Endothelial cell of umbilical vein (primary cell): ENCODE measurements at regions of chr16 and their contacts with region 1.

Region 1: GRCh38 chr16:65704866-65705265 is 583.0 kb upstream of the CDH11 start:
- DNase-seq: no peak
- H3K4me3 ChIP-seq: no peak overlapping the region
- H3K27ac ChIP-seq: no peak overlapping the region
- H3K4me1 ChIP-seq: no peaks in the 10 kb centered on the region
- H3K27me3 ChIP-seq: no peaks in the 10 kb centered on the region
- CTCF ChIP-seq: peak in 1 of 2 donors; percentile 7
- POLR2A ChIP-seq: no peak

Region 2: DNA sequence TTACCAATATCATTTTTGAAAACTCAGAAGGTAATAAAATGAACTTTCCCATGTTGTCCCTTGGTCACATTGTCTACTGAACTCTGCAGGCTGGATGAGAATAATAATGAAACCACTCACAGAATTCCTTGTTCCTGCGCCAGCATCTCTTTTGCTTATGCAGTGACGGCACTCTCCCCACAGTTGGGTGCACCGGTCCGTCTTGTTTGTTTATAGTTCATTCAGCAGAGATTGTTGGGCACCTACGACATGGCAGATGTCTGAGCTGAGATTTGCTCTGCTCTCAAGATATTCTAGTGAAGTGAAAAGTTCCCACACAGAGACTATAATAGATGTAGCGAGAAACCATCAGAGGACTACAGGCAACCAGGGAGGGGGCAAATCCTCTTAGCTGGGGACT is 207.3 kb before region 1 on chr16:
- CTCF ChIA-PET with region 1: no interaction called
- POLR2A ChIA-PET with region 1: no interaction called
- dilution Hi-C with region 1: no loop called
- intact Hi-C with region 1: no loop called
- DNase-seq: no peak
- H3K4me3 ChIP-seq: no peak overlapping the region
- H3K27ac ChIP-seq: no peak overlapping the region
- H3K4me1 ChIP-seq: no peaks in the 10 kb centered on the region
- H3K27me3 ChIP-seq: no peaks in the 10 kb centered on the region
- CTCF ChIP-seq: no peak
- POLR2A ChIP-seq: no peak

Region 3: GRCh38 chr16:65634291-65634690 is 70.6 kb before region 1 on chr16:
- CTCF ChIA-PET with region 1: no interaction called
- POLR2A ChIA-PET with region 1: no interaction called
- dilution Hi-C with region 1: no loop called
- intact Hi-C with region 1: no loop called
- DNase-seq: no peak
- H3K4me3 ChIP-seq: no peak overlapping the region
- H3K27ac ChIP-seq: no peak overlapping the region
- H3K4me1 ChIP-seq: no peaks in the 10 kb centered on the region
- H3K27me3 ChIP-seq: no peaks in the 10 kb centered on the region
- CTCF ChIP-seq: no peak
- POLR2A ChIP-seq: no peak

Region 4: GRCh38 chr16:65728167-65728566 is 23.3 kb after region 1 on chr16:
- CTCF ChIA-PET with region 1: no interaction called
- POLR2A ChIA-PET with region 1: no interaction called
- dilution Hi-C with region 1: no loop called
- intact Hi-C with region 1: no loop called
- DNase-seq: peak; percentile 13
- H3K4me3 ChIP-seq: no peak overlapping the region
- H3K27ac ChIP-seq: no peak overlapping the region
- H3K4me1 ChIP-seq: peaks cover 3% of the 10 kb centered on the region
- H3K27me3 ChIP-seq: no peaks in the 10 kb centered on the region
- CTCF ChIP-seq: no peak
- POLR2A ChIP-seq: no peak

Region 5: DNA sequence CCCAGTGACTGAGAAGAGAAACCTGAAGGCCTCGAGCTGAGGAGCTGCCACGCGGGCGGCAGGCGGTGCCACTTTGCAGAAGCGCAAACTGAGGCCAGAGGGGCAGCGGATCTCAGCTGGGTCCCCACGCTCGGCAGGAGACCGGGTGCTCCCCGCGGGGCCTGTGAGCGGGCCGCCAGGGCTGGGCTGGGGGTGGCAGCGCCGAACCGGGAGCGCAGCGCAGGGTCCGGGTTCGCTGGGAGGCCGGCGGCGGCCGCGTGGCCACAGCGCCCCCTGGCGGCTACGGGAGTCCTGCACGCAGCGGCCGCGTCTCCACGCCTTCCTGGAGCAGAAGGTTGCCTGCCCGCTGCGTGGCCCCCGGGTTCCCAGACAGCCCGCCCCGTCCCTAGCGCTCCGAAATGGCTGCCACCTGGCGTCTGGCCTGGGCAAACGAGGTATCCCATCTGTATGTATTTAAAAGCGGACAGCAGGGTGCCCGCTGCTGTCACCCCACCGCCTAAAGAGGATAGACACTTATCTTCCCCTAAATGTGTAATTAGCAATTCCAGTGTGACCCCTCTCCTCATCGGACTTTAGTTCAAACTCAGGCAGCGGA is 565.6 kb after region 1 on chr16:
- CTCF ChIA-PET with region 1: interaction called, 4 read pairs
- POLR2A ChIA-PET with region 1: no interaction called
- dilution Hi-C with region 1: no loop called
- intact Hi-C with region 1: loop called (anchors 2 kb)
- DNase-seq: peak; percentile 53
- H3K4me3 ChIP-seq: peak overlapping the region in 1 of 3 experiments; percentile 25
- H3K27ac ChIP-seq: no peak overlapping the region
- H3K4me1 ChIP-seq: peaks cover 4% of the 10 kb centered on the region
- H3K27me3 ChIP-seq: peaks cover 0 to 7% of the 10 kb centered on the region in 2 experiments
- CTCF ChIP-seq: peak; percentile 91
- POLR2A ChIP-seq: no peak